HCT116 (cell line): ENCODE measurements at regions of chr3 and their contacts with region 1.

Region 1: GRCh38 chr3:66816090-66816761 is 181.9 kb upstream of the KBTBD8 start:
- DNase-seq: peak; percentile 42
- ATAC-seq: peak; percentile 87
- H3K4me3 ChIP-seq: no peak overlapping the region
- H3K27ac ChIP-seq: no peak overlapping the region
- H3K4me1 ChIP-seq: no peaks in the 10 kb centered on the region
- H3K27me3 ChIP-seq: peaks cover 29% of the 10 kb centered on the region
- CTCF ChIP-seq: peak; percentile 32 to 65 (median 49)
- POLR2A ChIP-seq: no peak
- RAD21 ChIP-seq: peak; percentile 74

Region 2: GRCh38 chr3:66407611-66408218 is 408.5 kb before region 1 on chr3:
- CTCF ChIA-PET with region 1: interaction called, 15 read pairs
- POLR2A ChIA-PET with region 1: no interaction called
- RAD21 ChIA-PET with region 1: no interaction called
- intact Hi-C with region 1: loop called (anchors 1 kb)
- DNase-seq: peak; percentile 19
- ATAC-seq: peak; percentile 97
- H3K4me3 ChIP-seq: no peak overlapping the region
- H3K27ac ChIP-seq: no peak overlapping the region
- H3K4me1 ChIP-seq: no peaks in the 10 kb centered on the region
- H3K27me3 ChIP-seq: no peaks in the 10 kb centered on the region
- CTCF ChIP-seq: peak; percentile 68 to 95 (median 88)
- POLR2A ChIP-seq: no peak
- RAD21 ChIP-seq: peak; percentile 90

Region 3: GRCh38 chr3:66898155-66898554 is 81.9 kb after region 1 on chr3:
- CTCF ChIA-PET with region 1: no interaction called
- POLR2A ChIA-PET with region 1: no interaction called
- RAD21 ChIA-PET with region 1: no interaction called
- intact Hi-C with region 1: no loop called
- DNase-seq: no peak
- ATAC-seq: no peak
- H3K4me3 ChIP-seq: no peak overlapping the region
- H3K27ac ChIP-seq: no peak overlapping the region
- H3K4me1 ChIP-seq: no peaks in the 10 kb centered on the region
- H3K27me3 ChIP-seq: no peaks in the 10 kb centered on the region
- CTCF ChIP-seq: no peak
- POLR2A ChIP-seq: no peak
- RAD21 ChIP-seq: no peak